Posterior cingulate gyrus (tissue), 11 donors: ENCODE measurements at regions of chr13 and their contacts with region 1.

Region 1: GRCh38 chr13:76473552-76474134 is 412.6 kb downstream of the KCTD12 start:
- DNase-seq: peak in 9 of 10 donors; percentile 57 to 93 (median 76)

Region 2: DNA sequence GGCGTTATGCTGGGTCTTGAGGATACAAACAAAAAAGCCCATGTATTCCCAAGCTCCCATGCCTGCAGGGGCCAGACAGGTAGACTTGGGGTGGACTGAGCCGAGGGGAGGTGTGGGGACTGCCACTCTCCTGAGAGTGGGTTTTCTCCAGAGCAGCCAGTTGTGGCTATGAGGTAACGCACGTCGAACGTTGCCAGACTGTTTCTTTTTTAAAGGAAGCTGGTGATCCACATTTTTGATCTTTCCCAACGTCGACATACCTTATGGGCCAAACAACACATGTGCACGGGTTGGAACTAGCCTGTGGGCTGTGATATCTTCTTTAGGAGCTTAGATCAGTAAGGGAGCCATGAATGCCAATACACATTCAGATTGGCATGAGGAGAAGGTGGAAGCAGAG is 776.9 kb before region 1 on chr13:
- intact Hi-C with region 1: loop called (anchors 2 kb)
- DNase-seq: no peak